ENCODE measurements at regions of chr13 and their contacts with region 1.

Region 1: GRCh38 chr13:45280751-45281634 is 60.0 kb downstream of the TPT1 start:
- DNase-seq: peak; percentile 74
- ATAC-seq: peak; percentile 97

Region 2: DNA sequence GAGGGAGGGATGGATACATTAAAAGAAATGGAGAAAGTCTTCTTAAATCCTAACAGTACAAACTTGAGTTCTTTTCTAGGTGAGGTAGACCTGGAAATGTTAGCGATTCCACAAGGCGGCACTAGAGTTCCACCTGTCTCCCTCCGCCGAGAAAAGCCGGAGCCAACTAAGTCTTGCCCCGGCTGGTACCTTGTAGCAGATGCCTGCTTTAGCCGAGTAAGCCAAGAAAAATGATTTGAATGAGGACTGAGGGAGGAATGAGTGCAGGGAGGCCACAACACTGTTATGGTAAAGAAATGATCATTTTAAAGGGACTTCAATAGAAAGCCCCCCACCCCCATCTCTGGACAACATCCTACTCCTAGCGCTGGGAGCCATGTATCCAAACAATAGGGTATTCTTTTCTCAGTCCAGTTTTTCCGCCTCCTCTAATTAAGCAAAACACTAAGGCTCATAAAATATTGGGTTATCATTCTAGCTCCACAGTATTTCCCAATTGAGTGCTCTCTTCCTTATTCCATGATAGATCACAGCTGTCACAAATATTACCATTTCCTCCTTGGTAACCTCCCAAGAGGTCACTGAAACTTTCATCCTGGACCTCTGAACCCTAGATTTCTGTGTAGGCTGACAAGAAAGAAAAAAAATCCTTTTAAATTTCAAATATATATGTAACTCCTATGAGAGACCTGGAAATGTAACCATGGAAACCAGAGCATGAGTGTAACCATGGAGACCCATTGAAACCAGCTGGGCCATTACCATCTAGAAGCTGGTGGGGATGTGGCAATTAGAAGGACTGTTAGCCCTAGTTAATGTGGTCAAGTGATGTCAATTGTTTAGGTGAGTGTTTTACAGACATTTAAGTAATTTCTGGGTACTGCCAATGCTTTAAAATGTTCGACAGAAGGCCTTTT is 233.3 kb before region 1 on chr13:
- intact Hi-C with region 1: loop called (anchors 2 kb)
- DNase-seq: peak; percentile 63
- ATAC-seq: peak; percentile 78

Region 3: DNA sequence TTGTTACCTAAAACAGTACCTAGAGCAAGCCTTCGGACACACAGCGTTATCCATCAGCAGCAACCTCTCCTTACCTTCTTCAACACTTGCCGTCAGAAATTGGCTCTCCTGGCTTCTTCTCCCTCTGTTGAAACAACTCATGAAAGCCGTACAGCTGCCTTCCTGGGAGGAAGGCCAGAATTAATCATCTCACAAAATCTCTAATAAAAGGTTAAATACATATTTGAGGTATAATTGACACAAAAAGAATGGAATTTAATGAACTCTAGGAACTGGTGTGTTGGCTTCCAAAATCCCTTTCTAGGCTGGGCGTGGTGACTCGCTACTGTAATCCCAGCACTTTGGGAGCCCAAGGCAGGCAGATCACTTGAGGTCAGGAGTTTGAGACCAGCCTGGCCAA is 198.0 kb before region 1 on chr13:
- intact Hi-C with region 1: no loop called
- DNase-seq: no peak
- ATAC-seq: no peak

Region 4: DNA sequence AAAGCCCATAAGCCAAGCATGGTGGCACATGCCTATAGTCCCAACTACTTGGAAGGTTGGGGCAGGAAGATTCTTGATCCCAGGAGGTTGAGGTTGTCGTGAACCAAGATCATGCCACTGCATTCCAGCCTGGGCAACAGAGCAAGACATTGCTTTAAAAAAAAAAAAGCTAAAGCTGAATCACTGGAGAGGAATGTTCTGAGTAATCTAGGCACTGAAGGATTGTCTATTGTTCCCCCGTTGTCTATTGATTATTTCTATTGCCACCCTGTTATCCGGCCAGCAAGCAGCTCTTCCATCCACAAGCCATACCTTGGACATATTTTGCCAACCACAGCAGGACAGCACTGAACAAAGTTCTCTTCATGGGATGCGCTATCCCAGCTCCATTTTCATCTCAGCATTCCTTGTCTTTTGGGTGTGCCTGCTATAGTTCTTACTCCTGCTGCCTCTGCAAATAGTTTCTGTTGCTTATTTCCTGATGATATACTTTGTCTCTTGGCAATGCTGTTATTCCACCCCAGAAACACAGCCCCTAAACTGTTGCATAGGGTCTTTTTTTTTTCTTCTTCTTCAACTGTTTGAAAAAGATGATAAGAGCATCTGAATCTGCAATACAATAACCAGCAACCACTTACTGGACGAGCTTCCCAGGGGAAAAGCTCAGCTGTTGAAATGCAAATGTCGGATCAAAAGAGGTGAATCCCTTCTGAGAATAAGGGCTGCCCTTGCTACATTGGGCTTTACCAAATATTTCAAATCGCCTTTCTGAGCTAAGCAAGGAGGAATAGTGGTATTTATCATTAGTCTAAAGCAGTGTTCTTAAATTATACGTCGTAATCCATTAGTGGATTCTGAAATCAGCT is 592.7 kb after region 1 on chr13:
- intact Hi-C with region 1: no loop called
- DNase-seq: no peak
- ATAC-seq: no peak

Measured in left ventricle myocardium superior (tissue), 1 donor.